Endothelial cell of umbilical vein (primary cell): ENCODE measurements at regions of chr1 and their contacts with region 1.

Region 1: GRCh38 chr1:174968750-174969244 is 30.9 kb upstream of the CACYBP start:
- DNase-seq: peak; percentile 85
- H3K4me3 ChIP-seq: no peak overlapping the region
- H3K27ac ChIP-seq: peak overlapping the region; percentile 56
- H3K4me1 ChIP-seq: peaks cover 28% of the 10 kb centered on the region
- H3K27me3 ChIP-seq: no peaks in the 10 kb centered on the region
- CTCF ChIP-seq: no peak
- POLR2A ChIP-seq: no peak

Region 2: GRCh38 chr1:174954671-174955669 is 13.8 kb before region 1 on chr1:
- CTCF ChIA-PET with region 1: interaction called, 3 read pairs
- POLR2A ChIA-PET with region 1: interaction called, 3 read pairs
- dilution Hi-C with region 1: no loop called
- intact Hi-C with region 1: loop called (anchors 1 kb)
- DNase-seq: peak; percentile 47
- H3K4me3 ChIP-seq: no peak overlapping the region
- H3K27ac ChIP-seq: no peak overlapping the region
- H3K4me1 ChIP-seq: no peaks in the 10 kb centered on the region
- H3K27me3 ChIP-seq: peaks cover 0 to 3% of the 10 kb centered on the region in 2 experiments
- CTCF ChIP-seq: no peak
- POLR2A ChIP-seq: no peak

Region 3: GRCh38 chr1:174990382-174990999 is 21.7 kb after region 1 on chr1:
- CTCF ChIA-PET with region 1: interaction called, 4 read pairs
- POLR2A ChIA-PET with region 1: interaction called, 4 read pairs
- dilution Hi-C with region 1: no loop called
- intact Hi-C with region 1: loop called (anchors 2 kb)
- DNase-seq: peak; percentile 88
- H3K4me3 ChIP-seq: peak overlapping the region; percentile 46 to 91 (median 80)
- H3K27ac ChIP-seq: peak overlapping the region; percentile 83
- H3K4me1 ChIP-seq: peaks cover 22% of the 10 kb centered on the region
- H3K27me3 ChIP-seq: no peaks in the 10 kb centered on the region
- CTCF ChIP-seq: no peak
- POLR2A ChIP-seq: peak; percentile 21

Region 4: DNA sequence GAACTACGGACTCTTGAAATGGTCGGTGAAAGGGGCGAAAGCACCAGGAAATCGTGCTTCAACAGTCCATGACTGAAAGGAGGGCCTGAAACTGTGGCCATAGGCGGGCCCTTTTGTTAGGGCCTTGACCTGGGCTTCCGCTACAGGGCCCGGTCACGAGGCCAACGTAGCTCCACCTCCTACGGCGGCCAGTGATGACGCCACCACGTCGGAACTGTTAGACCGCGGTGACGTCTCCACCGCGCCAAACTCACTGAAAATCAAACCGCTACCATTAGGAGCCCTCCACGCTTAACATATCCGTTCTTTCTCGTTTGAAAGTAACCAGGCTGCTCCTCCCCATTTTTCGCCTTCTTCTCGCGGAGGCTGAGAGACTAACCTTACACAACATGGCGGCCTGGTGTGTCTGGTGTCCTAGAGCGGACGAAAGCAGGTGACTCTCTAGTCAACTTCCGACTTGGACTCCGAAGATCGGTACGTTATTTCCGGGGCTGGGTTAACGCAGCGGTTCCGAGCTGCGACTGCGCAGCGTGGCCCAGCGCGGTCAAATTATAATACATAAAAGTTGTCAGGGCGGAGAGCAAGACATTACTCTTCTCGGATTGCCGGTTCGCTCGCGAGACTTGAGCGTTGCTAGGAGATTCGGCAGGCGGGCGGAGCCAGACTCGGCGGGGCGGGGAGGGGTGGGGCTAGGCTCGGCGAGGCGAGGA is 30.6 kb after region 1 on chr1:
- CTCF ChIA-PET with region 1: no interaction called
- POLR2A ChIA-PET with region 1: interaction called, 4 read pairs
- dilution Hi-C with region 1: no loop called
- intact Hi-C with region 1: loop called (anchors 1 kb)
- DNase-seq: peak; percentile 100
- H3K4me3 ChIP-seq: peak overlapping the region in 2 of 3 experiments; percentile 67 to 95
- H3K27ac ChIP-seq: peak overlapping the region; percentile 90
- H3K4me1 ChIP-seq: peaks cover 38% of the 10 kb centered on the region
- H3K27me3 ChIP-seq: no peaks in the 10 kb centered on the region
- CTCF ChIP-seq: no peak
- POLR2A ChIP-seq: peak; percentile 91

Region 5: DNA sequence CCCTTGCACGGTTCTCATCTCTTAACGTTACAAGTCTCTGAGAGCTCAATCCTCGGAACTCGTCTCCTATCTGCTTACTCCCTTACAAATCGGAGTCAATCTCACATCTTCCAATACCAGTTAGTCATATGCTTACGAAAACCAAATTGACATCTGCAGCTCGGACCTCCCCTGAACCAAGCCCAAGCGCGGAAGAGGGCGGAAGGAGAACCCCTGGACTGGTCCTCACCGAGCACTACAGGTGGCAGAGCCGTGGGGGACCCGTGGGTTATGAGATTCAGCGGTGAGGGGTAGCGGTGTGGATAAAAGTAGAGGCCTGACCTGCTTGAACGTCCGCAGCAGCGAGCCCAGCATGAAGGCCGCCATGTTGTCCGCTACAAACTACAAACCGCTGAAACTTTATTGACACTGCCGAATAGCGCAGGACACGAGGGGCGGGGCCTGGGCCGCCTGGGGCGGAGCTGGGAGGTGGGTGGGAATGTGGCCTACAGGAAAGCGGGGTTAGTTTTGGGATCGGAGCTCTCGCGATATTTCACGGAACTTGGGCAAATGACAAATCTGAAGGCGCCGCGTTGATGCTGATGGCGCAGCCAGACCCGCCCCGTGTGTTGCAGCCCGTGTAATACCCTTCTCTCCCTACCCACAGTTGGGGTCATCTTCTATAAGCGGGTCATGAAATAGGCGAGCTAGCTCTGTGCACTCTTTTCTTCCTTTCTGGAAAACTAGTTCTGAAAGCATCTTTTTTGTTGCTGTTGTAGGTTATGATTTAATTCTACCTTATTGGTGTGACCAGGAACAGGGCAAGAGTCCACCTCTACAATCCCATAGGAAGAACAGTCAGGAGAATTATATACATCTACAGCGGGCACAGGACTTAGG is 54.5 kb after region 1 on chr1 and contains the start of gene MRPS14:
- CTCF ChIA-PET with region 1: no interaction called
- POLR2A ChIA-PET with region 1: no interaction called
- dilution Hi-C with region 1: no loop called
- intact Hi-C with region 1: loop called (anchors 2 kb)
- DNase-seq: peak; percentile 98
- H3K4me3 ChIP-seq: peak within 1 kb of the TSS; percentile 83 to 98 (median 96)
- H3K27ac ChIP-seq: peak within 1 kb of the TSS; percentile 68
- H3K4me1 ChIP-seq: peaks cover 12% of the 10 kb centered on the region
- H3K27me3 ChIP-seq: no peaks in the 10 kb centered on the region
- CTCF ChIP-seq: no peak
- POLR2A ChIP-seq: peak; percentile 77
- total RNA-seq, gene MRPS14: 31.6 and 31.8 TPM in 2 replicates